Activated CD4-positive, alpha-beta T cell treated with anti-CD3 and anti-CD28 coated beads, Interleukin-2, amount 10 ng/mL, durations not matched to agents 24 days and 14 days (primary cell): ENCODE measurements at regions of chr4 and their contacts with region 1.

Region 1: GRCh38 chr4:72468904-72469502 is 100.0 kb downstream of the ADAMTS3 start:
- DNase-seq: no peak
- H3K4me3 Mint-ChIP-seq: no peak overlapping the region
- H3K27ac Mint-ChIP-seq: no peak overlapping the region
- H3K4me1 Mint-ChIP-seq: no peaks in the 10 kb centered on the region
- H3K27me3 Mint-ChIP-seq: no peaks in the 10 kb centered on the region

Region 2: GRCh38 chr4:72326692-72327632 is 142.0 kb before region 1 on chr4:
- intact Hi-C with region 1: loop called (anchors 10 kb)
- DNase-seq: no peak
- H3K4me3 Mint-ChIP-seq: no peak overlapping the region
- H3K27ac Mint-ChIP-seq: no peak overlapping the region
- H3K4me1 Mint-ChIP-seq: no peaks in the 10 kb centered on the region
- H3K27me3 Mint-ChIP-seq: no peaks in the 10 kb centered on the region